Tibial artery (tissue), 4 donors: ENCODE measurements at regions of chr12 and their contacts with region 1.

Region 1: DNA sequence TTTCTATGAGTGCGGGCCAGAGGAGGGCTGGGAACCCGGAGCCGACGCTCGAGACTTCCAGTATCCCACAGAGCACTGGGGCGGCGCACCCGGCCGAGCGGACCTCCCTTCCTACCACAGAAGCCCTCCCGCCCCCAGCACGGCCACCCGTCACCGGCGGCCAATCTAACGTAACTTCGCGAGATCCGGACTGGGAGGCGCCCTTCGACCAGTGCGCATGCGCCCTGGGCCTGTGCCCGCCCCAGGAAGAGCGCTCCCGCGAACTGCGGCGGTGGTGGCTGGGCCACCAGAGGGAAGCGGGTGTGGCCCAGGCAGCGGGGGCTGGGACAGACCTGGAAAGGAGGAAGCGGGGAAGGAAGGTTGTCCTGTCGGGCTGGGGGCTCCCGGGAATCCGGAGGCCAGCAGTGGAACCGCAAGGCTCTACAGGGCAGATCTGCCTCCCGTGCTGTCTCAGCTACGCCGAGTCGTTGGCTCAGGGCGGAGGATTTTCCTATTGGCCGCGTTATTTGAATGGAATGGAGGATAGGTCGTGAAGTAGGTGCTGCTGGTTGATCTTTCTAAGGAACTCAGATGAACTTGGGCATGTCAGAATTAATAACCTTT is at the start of gene PPP1R12A:
- DNase-seq: peak; percentile 97 to 99
- H3K4me3 ChIP-seq: peak within 1 kb of the TSS; percentile 70 to 88
- H3K27ac ChIP-seq: peak within 1 kb of the TSS; percentile 98
- H3K4me1 ChIP-seq: peaks cover 0 to 39% (median 9%) of the 10 kb centered on the region in 4 donors
- H3K27me3 ChIP-seq: no peaks in the 10 kb centered on the region
- CTCF ChIP-seq: peak; percentile 17 to 22

Region 2: DNA sequence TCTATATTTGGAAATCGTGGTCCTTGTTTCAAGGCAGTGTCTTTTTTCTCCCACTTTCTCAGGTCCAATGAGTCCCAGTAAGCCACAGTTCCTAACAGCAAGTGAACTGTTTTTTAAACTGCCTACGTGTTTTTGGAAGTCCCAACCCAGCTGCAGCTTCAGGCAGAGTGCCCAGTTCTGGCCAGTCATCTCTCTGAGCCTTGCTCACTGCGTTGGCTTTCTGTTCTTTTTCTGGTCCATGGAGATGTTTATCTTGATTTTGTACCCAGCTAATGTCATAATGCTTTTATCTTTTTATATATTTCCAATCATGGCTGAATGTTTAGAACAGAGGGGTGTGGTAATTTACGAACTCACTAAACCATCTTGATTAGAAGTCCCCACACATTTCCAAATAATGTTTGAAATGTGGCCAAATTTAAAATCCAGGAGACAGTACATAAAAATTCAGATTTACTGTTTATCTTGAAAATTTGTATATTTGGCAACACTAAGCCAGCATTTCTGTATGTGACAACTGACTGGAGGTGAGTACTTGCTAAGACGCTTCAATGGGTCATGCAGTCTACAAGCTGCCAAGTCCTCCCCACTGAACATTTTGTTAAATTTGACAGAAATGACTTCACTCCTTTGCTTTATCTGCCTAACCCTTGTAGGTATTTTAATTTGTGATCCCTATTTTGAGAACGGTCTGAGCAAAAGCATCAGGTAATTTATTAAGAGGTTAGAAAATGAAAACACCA is 118.1 kb after region 1 on chr12:
- intact Hi-C with region 1: loop called (anchors 10 kb)
- DNase-seq: peak; percentile 81 to 96
- H3K4me3 ChIP-seq: peak overlapping the region in 1 of 2 donors; percentile 9
- H3K27ac ChIP-seq: peak overlapping the region; percentile 83 to 84
- H3K4me1 ChIP-seq: peaks cover 0 to 39% (median 7%) of the 10 kb centered on the region in 4 donors
- H3K27me3 ChIP-seq: no peaks in the 10 kb centered on the region
- CTCF ChIP-seq: no peak